A549 (cell line): ENCODE measurements at regions of chr22 and their contacts with region 1.

Region 1: GRCh38 chr22:42511401-42511891 is 8.2 kb downstream of the RRP7A start:
- DNase-seq: no peak
- ATAC-seq: no peak
- H3K4me3 ChIP-seq: no peak overlapping the region
- H3K27ac ChIP-seq: no peak overlapping the region
- H3K4me1 ChIP-seq: 0 out of 3 replicates have a peak, but pooled peaks cover 3% of the 10 kb centered on the region
- CTCF ChIP-seq: no peak
- EP300 ChIP-seq: no peak
- POLR2A ChIP-seq: no peak
- RAD21 ChIP-seq: no peak

Region 2: GRCh38 chr22:42533638-42533977 is 22.2 kb after region 1 on chr22:
- CTCF ChIA-PET with region 1: interaction called, 4 read pairs
- POLR2A ChIA-PET with region 1: interaction called, 11 read pairs
- DNase-seq: no peak
- ATAC-seq: no peak
- H3K4me3 ChIP-seq: no peak overlapping the region
- H3K27ac ChIP-seq: no peak overlapping the region
- H3K4me1 ChIP-seq: peaks cover 4% of the 10 kb centered on the region; the same call in 1 of the 3 replicates
- CTCF ChIP-seq: no peak
- EP300 ChIP-seq: no peak
- POLR2A ChIP-seq: no peak
- RAD21 ChIP-seq: no peak